ENCODE measurements at regions of chr9 and their contacts with region 1.

Region 1: GRCh38 chr9:18920141-18921084 is 112.6 kb downstream of the SAXO1 start:
- DNase-seq: no peak
- ATAC-seq: no peak
- H3K4me3 ChIP-seq: no peak overlapping the region
- H3K27ac ChIP-seq: no peak overlapping the region
- H3K4me1 ChIP-seq: no peaks in the 10 kb centered on the region
- H3K27me3 ChIP-seq: no peaks in the 10 kb centered on the region
- CTCF ChIP-seq: no peak
- POLR2A ChIP-seq: no peak

Region 2: DNA sequence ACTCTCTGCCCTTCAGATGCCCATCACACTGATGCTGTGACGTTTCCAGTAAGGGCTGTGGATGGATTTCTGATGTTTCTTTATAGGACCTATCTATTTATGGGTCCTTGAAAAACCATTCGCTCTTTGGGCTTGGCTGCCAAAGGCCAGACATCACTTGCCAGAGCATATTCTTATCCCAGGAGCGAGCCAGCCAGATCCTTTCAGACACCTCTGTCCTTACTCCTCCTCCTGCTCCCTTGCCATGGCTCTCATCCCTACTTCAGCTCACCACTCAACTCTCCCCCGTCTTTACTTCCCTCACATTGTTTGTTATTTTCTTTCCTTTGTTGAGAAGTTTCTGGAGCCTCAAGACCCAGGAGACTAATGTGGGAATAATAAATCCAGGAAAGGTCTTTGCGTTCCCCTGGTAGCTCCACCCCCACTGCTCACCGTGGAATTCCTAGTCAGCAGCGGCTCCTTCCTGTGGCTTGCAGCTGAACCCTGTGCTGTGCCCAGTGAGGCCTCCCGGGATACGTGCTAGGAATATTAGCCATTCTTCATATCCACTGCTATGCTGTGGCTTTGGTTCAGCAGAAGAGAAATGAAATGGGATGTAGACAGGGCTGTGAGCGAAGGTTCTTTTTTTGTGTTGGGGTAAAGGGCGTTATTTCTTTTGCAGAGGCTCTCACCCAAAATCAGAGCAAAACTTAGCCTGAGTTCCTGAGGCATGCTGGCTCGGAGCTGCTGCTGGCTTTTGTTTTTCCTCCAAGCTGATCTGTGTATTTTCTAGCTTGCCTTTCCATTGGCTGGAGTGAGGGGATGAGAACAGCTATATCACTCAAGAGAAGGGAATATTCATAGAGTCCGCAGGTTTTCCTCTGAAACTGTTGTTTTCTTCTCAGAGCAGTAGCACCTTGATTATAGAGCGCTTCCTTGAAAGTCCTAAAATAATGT is 58.5 kb before region 1 on chr9:
- intact Hi-C with region 1: loop called in 1 of 2 experiments (anchors 10 kb)
- DNase-seq: no peak
- ATAC-seq: no peak
- H3K4me3 ChIP-seq: no peak overlapping the region
- H3K27ac ChIP-seq: no peak overlapping the region
- H3K4me1 ChIP-seq: no peaks in the 10 kb centered on the region
- H3K27me3 ChIP-seq: no peaks in the 10 kb centered on the region
- CTCF ChIP-seq: no peak
- POLR2A ChIP-seq: no peak

Region 3: DNA sequence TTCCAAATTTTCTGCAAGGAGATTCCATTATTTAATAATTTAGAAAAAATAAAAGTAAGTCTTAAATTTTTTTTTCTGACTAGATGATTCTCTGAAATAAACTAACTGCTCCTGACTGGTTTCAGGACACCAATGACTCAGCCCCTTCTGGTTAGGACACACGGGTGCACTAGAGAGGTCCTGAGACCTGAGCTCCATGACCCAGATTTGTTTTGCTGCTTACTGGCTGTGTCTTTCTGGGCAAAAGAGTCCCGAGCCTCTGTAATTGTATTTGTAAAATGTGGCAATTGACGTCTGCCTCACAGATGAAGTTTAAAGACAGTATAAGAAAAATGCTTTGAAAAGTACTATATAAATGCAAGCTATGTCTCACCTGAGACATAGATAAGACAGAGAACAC is 779.3 kb after region 1 on chr9:
- intact Hi-C with region 1: no loop called
- DNase-seq: no peak
- ATAC-seq: no peak
- H3K4me3 ChIP-seq: no peak overlapping the region
- H3K27ac ChIP-seq: no peak overlapping the region
- H3K4me1 ChIP-seq: no peaks in the 10 kb centered on the region
- H3K27me3 ChIP-seq: no peaks in the 10 kb centered on the region
- CTCF ChIP-seq: no peak
- POLR2A ChIP-seq: no peak

Measured in right lobe of liver (tissue), 6 donors.